ENCODE measurements at regions of chr2 and their contacts with region 1.

Region 1: GRCh38 chr2:178123163-178123562 is 10.9 kb downstream of the RBM45 start:
- DNase-seq: no peak
- H3K4me3 ChIP-seq: no peak overlapping the region
- H3K27ac ChIP-seq: no peak overlapping the region
- H3K4me1 ChIP-seq: no peaks in the 10 kb centered on the region
- H3K27me3 ChIP-seq: no peaks in the 10 kb centered on the region
- CTCF ChIP-seq: no peak
- EP300 ChIP-seq: no peak
- POLR2A ChIP-seq: no peak

Region 2: DNA sequence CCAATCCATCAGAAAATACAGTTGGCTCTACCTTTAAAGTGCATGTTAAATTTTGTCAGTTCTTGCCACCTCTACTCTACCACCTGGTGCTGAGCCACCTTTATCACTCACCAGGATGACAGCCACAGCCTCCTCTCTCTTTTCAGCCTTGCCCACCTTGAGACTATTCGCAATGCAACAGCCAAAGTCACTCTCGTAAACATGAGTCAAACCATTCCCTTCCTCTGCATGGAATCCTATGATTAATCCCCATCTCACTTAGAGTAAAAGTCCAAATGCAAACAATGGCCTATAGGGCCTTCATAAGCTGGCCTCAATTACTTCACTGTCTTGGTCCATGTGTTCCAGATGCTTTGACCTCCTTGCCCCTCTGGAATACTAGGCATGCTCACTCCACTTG is 65.3 kb after region 1 on chr2:
- in situ Hi-C with region 1: no loop called
- intact Hi-C with region 1: loop called (anchors 5 kb)
- DNase-seq: no peak
- H3K4me3 ChIP-seq: no peak overlapping the region
- H3K27ac ChIP-seq: no peak overlapping the region
- H3K4me1 ChIP-seq: peaks cover 0 to 4% (median 1%) of the 10 kb centered on the region in 4 donors
- H3K27me3 ChIP-seq: peaks cover 23% of the 10 kb centered on the region
- CTCF ChIP-seq: no peak
- EP300 ChIP-seq: no peak
- POLR2A ChIP-seq: no peak